ENCODE measurements at regions of chr16 and their contacts with region 1.

Region 1: GRCh38 chr16:56657555-56658326 is at the start of gene MT1F:
- DNase-seq: peak; percentile 81
- ATAC-seq: peak; percentile 88
- H3K4me3 Mint-ChIP-seq: peak within 1 kb of the TSS; percentile 97
- H3K27ac Mint-ChIP-seq: peak within 1 kb of the TSS; percentile 88
- H3K4me1 Mint-ChIP-seq: peaks cover 28% of the 10 kb centered on the region
- H3K27me3 Mint-ChIP-seq: peaks cover 15% of the 10 kb centered on the region
- total RNA-seq, gene MT1F: 25.8 to 28.0 TPM

Region 2: DNA sequence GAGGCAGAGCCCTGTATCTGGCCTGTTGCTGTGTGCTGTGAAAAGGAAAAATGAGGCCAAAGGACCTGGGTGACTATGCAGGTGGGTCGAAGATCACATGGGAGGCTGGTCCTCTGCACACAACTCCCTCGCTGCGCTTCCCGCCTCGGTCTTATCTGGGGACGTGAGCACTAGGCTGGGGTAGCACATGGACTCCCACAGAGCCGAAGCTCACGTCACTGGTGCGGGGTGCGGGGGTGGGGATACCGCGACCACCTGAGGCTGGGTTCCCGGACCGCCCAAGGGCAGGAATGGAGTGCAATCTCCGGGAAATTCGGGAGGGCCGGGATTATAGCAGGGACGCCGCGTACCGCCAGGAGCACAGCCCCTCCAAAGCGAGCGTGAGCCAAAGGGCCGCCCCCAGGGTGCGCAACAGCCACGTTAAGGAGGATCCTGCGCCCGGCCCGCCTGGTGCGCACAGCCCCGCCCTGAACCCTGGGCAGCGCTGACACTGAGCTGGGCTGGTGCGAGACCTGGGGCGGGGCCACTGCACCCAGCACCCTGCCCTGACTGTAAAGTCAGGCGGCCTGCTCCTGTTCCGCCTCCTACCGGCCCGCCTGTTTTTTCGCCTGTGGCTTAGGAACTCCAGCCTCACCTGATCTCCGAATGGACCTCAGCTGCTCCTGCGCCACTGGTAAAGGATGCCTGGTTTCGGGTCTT is 14.5 kb before region 1 on chr16:
- CTCF ChIA-PET with region 1: interaction called, 10 read pairs
- POLR2A ChIA-PET with region 1: interaction called, 6 read pairs
- DNase-seq: peak; percentile 87
- ATAC-seq: peak; percentile 100
- H3K4me3 Mint-ChIP-seq: peak overlapping the region; percentile 66
- H3K27ac Mint-ChIP-seq: no peak overlapping the region
- H3K4me1 Mint-ChIP-seq: peaks cover 28% of the 10 kb centered on the region
- H3K27me3 Mint-ChIP-seq: peaks cover 69% of the 10 kb centered on the region

Region 3: DNA sequence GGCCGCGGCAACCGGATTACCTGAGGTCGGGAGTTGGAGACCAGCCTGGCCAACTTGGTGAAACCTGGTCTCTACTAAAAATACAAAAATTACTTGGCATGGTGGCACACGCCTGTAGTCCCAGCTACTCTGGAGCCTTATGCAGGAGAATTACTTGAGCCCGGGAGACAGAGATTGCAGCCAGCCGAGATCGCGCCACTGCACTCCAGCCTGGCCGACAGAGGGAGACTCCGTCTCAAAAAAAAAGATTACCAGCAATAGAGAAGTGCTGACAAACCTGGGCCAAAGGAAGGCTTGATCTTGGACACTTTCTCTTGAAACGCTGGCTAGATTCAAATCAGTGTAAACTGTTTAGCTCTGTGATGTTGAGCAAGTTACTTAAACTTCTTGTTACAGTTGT is 16.2 kb after region 1 on chr16:
- CTCF ChIA-PET with region 1: interaction called, 10 read pairs
- POLR2A ChIA-PET with region 1: interaction called, 3 read pairs
- DNase-seq: peak; percentile 51
- ATAC-seq: peak; percentile 44
- H3K4me3 Mint-ChIP-seq: no peak overlapping the region
- H3K27ac Mint-ChIP-seq: no peak overlapping the region
- H3K4me1 Mint-ChIP-seq: peaks cover 38% of the 10 kb centered on the region
- H3K27me3 Mint-ChIP-seq: peaks cover 51% of the 10 kb centered on the region